PC-3 (cell line): ENCODE measurements at regions of chr6 and their contacts with region 1.

Region 1: DNA sequence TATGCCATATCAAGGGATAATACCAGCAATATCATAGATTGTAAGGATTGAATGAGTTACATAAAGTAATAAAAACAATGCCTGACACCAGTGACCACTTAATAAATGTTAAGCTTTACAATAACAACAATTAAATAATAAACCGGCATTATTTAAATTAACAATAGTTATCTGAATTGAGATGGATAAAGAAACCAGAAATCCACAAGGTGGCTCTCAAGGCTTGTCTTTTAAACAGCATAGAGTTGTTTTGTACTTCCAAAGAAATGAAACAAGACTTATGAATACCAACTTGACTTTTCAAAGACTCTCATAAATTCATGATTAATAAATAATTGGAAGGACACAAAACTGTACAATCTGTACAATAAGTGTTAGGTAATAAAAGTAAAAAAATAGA is 203.1 kb downstream of the ASCC3 start:
- DNase-seq: no peak
- ATAC-seq: no peak
- H3K4me3 ChIP-seq: no peak overlapping the region
- H3K27ac ChIP-seq: no peak overlapping the region
- H3K4me1 ChIP-seq: no peaks in the 10 kb centered on the region
- H3K27me3 ChIP-seq: no peaks in the 10 kb centered on the region
- CTCF ChIP-seq: peak; percentile 40; the same call in 1 of the 2 replicates

Region 2: DNA sequence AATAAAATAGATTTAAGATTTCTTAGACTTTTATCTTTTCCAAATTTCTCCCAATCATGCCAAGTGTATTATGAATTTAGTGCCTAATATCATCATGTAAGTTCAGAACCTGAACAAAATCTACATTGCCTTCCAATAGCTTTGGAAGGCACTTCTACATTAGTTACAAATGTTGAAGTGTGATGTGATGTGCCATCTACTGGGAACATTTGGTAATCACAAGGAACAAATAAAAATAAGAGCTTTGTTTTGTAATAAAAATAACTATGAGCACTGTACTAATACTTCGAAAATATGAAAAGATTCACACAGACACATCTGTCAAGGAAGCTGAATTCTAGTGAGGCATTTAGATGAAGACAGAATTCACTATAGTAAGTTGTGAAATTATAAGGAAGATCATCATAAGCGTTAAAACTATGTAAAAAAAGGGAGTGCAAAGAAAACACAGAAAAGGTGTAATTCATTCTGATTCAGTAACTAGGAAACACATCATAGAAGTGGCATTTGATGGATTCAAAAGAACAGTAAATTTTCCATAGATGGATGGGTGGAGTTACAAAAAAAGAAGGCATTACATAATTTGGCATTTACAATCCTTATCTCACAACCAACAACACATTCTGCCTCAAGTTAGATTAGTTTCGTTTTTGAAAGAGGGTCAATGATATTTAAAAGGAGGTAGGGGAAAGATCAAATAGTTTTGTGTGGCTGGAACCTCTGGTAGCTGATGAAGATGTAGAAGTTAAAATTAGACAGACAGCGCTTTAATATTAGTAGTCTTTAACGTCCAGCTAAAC is 42.1 kb after region 1 on chr6:
- CTCF ChIA-PET with region 1: no interaction called
- POLR2A ChIA-PET with region 1: no interaction called
- intact Hi-C with region 1: loop called (anchors 5 kb)
- DNase-seq: peak; percentile 40
- ATAC-seq: peak; percentile 20; the same call in 1 of the 2 replicates
- H3K4me3 ChIP-seq: peak overlapping the region; percentile 15; the same call in 1 of the 2 replicates
- H3K27ac ChIP-seq: no peak overlapping the region
- H3K4me1 ChIP-seq: no peaks in the 10 kb centered on the region
- H3K27me3 ChIP-seq: no peaks in the 10 kb centered on the region
- CTCF ChIP-seq: peak; percentile 65